ENCODE measurements at regions of chr7 and their contacts with region 1.

Region 1: GRCh38 chr7:90708841-90709317 is 112.8 kb downstream of the CDK14 start:
- DNase-seq: no peak
- H3K4me3 Mint-ChIP-seq: no peak overlapping the region
- H3K27ac Mint-ChIP-seq: no peak overlapping the region
- H3K4me1 Mint-ChIP-seq: no peaks in the 10 kb centered on the region
- H3K27me3 Mint-ChIP-seq: no peaks in the 10 kb centered on the region

Region 2: GRCh38 chr7:90804370-90804769 is 95.5 kb after region 1 on chr7:
- intact Hi-C with region 1: no loop called
- DNase-seq: no peak
- H3K4me3 Mint-ChIP-seq: no peak overlapping the region
- H3K27ac Mint-ChIP-seq: no peak overlapping the region
- H3K4me1 Mint-ChIP-seq: no peaks in the 10 kb centered on the region
- H3K27me3 Mint-ChIP-seq: no peaks in the 10 kb centered on the region

Region 3: DNA sequence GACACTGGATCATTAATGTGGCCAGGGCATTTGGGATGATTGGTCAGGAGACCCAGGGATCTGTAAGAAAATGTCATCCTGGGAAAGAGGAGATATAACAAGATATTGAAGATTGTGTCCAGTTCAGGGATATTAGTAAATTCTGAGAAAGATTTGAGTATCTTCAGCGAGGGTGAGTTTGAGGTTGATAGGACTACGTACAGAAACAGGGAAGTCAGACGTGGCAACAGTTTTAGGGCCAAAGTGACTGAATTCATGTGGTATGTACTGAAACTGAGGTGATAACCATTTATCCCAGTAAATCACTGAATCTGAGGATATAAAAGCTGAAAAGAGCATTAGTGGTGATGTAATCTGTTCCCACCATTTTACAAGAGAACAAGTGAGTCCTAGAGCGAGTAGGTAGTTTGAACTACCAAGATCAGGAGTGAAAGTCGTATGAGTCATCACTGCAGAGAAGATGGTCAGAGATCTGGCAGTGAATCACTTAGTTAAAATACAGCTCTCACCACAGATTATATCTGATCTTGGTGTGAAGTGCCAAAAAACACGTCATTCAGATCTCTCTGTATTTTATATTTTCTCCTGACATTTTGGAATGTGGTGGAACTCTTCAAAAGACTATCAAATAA is 107.7 kb after region 1 on chr7:
- intact Hi-C with region 1: no loop called
- DNase-seq: no peak
- H3K4me3 Mint-ChIP-seq: no peak overlapping the region
- H3K27ac Mint-ChIP-seq: no peak overlapping the region
- H3K4me1 Mint-ChIP-seq: peaks cover 14% of the 10 kb centered on the region
- H3K27me3 Mint-ChIP-seq: peaks cover 6% of the 10 kb centered on the region

Region 4: DNA sequence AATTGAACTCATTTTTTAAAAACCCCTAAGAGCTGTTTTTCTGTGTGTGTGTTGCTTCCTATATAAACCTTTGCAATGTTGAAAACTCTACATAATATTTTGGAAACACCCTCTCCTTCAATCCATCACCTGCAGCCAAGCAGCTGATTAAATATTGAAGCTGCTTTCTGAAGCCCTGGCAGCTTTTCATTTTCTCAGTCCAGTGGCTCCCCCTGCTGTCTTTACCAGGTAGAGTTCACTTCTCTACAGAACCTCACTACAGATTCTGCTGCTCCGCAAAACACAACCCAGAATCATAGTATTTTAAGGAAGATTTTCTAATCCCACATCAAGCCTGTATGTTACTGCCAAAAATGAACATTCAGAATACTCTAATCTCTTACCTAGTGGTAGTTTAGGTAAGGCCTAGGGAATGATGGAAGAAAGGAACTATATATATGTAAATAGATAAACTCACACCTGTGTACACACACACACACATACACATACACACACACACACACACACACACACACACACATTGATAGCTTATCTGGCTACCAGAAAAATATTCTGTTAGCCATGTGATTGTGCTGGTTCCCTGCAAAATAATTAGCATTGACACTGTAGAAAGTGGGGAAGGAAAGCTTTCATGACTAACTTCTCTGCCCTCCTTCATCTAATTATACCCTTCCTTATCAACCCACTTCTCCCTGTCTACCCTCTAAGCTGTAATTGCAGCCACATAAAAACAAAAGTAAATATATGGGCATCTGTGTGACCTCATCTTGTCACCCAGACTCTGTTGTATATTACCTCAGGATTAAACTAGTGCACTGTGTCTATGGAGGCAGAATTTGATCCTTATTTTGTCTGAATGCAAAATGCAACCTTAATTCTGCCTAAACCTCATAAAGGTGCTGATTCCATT is 325.8 kb after region 1 on chr7:
- intact Hi-C with region 1: loop called (anchors 10 kb)
- DNase-seq: no peak
- H3K4me3 Mint-ChIP-seq: no peak overlapping the region
- H3K27ac Mint-ChIP-seq: no peak overlapping the region
- H3K4me1 Mint-ChIP-seq: no peaks in the 10 kb centered on the region
- H3K27me3 Mint-ChIP-seq: no peaks in the 10 kb centered on the region